ENCODE measurements at regions of chr4 and their contacts with region 1.

Region 1: GRCh38 chr4:110005461-110006056 is 92.9 kb downstream of the EGF start:
- DNase-seq: peak in 3 of 14 experiments; percentile 72 to 79 (median 77)
- ATAC-seq: no peak
- H3K4me3 ChIP-seq: no peak overlapping the region
- H3K4me3 Mint-ChIP-seq: no peak overlapping the region
- H3K27ac ChIP-seq: no peak overlapping the region
- H3K27ac Mint-ChIP-seq: no peak overlapping the region
- H3K4me1 ChIP-seq: no peaks in the 10 kb centered on the region
- H3K4me1 Mint-ChIP-seq: no peaks in the 10 kb centered on the region
- H3K27me3 ChIP-seq: no peaks in the 10 kb centered on the region
- H3K27me3 Mint-ChIP-seq: no peaks in the 10 kb centered on the region
- CTCF ChIP-seq: peak; percentile 88

Region 2: DNA sequence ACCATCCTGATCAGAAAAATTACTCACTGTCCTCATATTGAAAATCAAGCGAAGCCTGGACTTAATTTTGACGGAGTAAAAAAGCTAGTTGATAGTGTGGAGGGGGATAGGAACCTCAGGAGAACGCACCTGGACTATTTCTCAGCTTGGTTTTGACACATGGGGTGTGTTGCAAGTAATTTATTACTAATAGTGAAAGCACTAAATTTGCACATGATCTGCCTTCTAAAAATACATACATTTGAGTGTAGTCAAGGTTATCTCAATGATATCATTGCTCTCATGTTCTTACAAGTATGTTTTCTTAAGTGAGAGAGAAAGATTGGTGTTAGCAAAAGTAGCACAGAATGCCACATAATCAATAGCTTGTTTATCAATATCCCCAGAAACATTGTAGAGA is 128.2 kb before region 1 on chr4:
- CTCF ChIA-PET with region 1: no interaction called
- POLR2A ChIA-PET with region 1: no interaction called
- intact Hi-C with region 1: no loop called
- DNase-seq: no peak
- ATAC-seq: no peak
- H3K4me3 ChIP-seq: no peak overlapping the region
- H3K4me3 Mint-ChIP-seq: no peak overlapping the region
- H3K27ac ChIP-seq: no peak overlapping the region
- H3K27ac Mint-ChIP-seq: no peak overlapping the region
- H3K4me1 ChIP-seq: no peaks in the 10 kb centered on the region
- H3K4me1 Mint-ChIP-seq: no peaks in the 10 kb centered on the region
- H3K27me3 ChIP-seq: no peaks in the 10 kb centered on the region
- H3K27me3 Mint-ChIP-seq: no peaks in the 10 kb centered on the region
- CTCF ChIP-seq: no peak

Region 3: DNA sequence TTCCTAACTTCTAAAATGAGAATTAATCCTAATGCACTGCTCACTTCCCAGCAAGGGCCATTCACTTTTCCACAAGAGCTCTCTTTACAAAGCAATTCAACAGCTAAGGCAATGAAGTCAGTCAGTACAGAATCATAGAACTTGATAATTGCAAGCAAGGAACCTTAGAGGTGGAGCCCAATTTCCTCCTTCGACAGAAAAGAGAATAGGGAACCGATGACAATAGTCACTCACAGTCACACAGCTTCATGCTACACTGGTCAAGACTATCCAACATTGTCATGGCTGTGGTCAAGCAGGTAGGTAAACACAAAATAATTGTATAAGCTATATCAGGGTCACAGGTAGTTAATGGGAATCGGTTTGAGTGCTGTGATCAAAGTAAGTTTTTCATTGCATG is 102.9 kb after region 1 on chr4:
- CTCF ChIA-PET with region 1: no interaction called
- POLR2A ChIA-PET with region 1: no interaction called
- intact Hi-C with region 1: no loop called
- DNase-seq: peak in 2 of 14 experiments; percentile 14 to 19
- ATAC-seq: no peak
- H3K4me3 ChIP-seq: no peak overlapping the region
- H3K4me3 Mint-ChIP-seq: no peak overlapping the region
- H3K27ac ChIP-seq: no peak overlapping the region
- H3K27ac Mint-ChIP-seq: no peak overlapping the region
- H3K4me1 ChIP-seq: no peaks in the 10 kb centered on the region
- H3K4me1 Mint-ChIP-seq: no peaks in the 10 kb centered on the region
- H3K27me3 ChIP-seq: no peaks in the 10 kb centered on the region
- H3K27me3 Mint-ChIP-seq: no peaks in the 10 kb centered on the region
- CTCF ChIP-seq: no peak

Region 4: DNA sequence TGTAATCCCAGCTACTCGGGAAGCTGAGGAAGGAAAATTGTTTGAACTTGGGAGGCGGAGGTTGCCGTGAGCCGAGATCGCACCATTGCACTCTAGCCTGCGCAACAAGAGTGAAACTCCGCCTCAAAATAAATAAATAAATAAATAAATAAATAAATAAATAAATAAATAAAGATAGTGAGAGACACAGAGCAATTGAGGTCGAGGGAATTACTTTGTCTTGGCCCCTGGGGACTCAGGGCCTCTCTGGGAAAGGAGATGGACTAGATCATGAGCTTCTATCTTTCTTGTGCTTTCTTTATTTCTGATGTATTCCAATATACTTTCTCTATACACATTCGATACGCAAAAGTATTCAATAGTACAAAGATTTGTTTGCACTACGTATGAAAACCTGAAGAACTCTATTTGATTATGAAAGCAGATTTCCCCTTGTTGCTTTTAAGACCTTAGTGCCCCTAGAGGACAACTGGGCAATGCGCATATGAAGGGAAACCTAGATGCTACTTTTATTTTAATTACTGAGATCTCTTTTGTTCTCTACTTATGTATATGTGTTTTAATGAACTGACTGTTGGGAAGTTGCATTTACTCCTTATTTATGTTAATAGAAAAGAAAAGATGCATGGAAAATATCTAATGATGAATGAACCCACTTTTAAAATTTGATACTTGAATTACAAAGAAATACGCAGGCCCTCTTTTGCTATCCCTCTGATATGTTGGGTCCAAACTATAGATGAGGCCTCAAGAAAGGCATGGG is 205.6 kb after region 1 on chr4:
- CTCF ChIA-PET with region 1: no interaction called
- POLR2A ChIA-PET with region 1: no interaction called
- intact Hi-C with region 1: loop called (anchors 1 to 5 kb)
- DNase-seq: peak in 8 of 14 experiments; percentile 4 to 70 (median 34)
- ATAC-seq: peak; percentile 80
- H3K4me3 ChIP-seq: no peak overlapping the region
- H3K4me3 Mint-ChIP-seq: no peak overlapping the region
- H3K27ac ChIP-seq: no peak overlapping the region
- H3K27ac Mint-ChIP-seq: no peak overlapping the region
- H3K4me1 ChIP-seq: peaks cover 2% of the 10 kb centered on the region
- H3K4me1 Mint-ChIP-seq: peaks cover 4% of the 10 kb centered on the region
- H3K27me3 ChIP-seq: no peaks in the 10 kb centered on the region
- H3K27me3 Mint-ChIP-seq: peaks cover under 1% of the 10 kb centered on the region
- CTCF ChIP-seq: peak; percentile 82

Region 5: GRCh38 chr4:111283061-111283677 is 1277.6 kb after region 1 on chr4:
- CTCF ChIA-PET with region 1: no interaction called
- POLR2A ChIA-PET with region 1: no interaction called
- intact Hi-C with region 1: loop called in 1 of 2 experiments (anchors 10 kb)
- DNase-seq: peak in 6 of 14 experiments; percentile 0 to 37 (median 22)
- ATAC-seq: no peak
- H3K4me3 ChIP-seq: no peak overlapping the region
- H3K4me3 Mint-ChIP-seq: no peak overlapping the region
- H3K27ac ChIP-seq: no peak overlapping the region
- H3K27ac Mint-ChIP-seq: no peak overlapping the region
- H3K4me1 ChIP-seq: no peaks in the 10 kb centered on the region
- H3K4me1 Mint-ChIP-seq: no peaks in the 10 kb centered on the region
- H3K27me3 ChIP-seq: no peaks in the 10 kb centered on the region
- H3K27me3 Mint-ChIP-seq: no peaks in the 10 kb centered on the region
- CTCF ChIP-seq: peak; percentile 44